Stomach (tissue), 19 donors: ENCODE measurements at regions of chr20 and their contacts with region 1.

Region 1: DNA sequence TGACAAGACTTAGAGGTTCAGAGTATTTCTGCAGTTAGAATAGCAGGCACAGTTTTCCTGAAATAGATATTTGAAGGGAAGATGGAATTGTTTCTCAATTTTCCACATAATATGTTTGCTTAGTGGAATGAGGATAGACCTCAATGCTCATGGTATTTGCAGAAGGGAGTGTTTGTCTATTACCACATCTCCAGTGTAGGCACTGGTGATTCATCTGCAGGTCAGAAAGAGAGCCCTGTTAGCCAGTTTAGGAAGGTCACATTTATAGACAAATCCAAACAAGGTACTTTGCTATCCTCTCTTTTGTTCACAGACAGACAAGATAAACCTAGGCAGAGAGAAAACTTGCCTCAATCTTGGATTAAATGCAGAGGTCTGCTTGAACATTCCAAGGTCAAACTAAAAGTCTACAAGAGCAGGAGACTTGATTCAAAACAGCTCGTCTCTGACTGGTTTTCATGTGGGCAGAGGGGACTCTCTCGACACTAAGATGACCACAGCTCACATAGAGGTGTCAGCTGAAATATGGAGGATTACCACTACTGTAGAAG is 22.8 kb downstream of the ISM1 start:
- DNase-seq: no peak
- H3K4me3 ChIP-seq: no peak overlapping the region
- H3K27ac ChIP-seq: no peak overlapping the region
- H3K4me1 ChIP-seq: no peaks in the 10 kb centered on the region
- H3K27me3 ChIP-seq: no peaks in the 10 kb centered on the region
- CTCF ChIP-seq: no peak
- EP300 ChIP-seq: no peak
- POLR2A ChIP-seq: no peak

Region 2: GRCh38 chr20:12997128-12998031 is 246.5 kb before region 1 on chr20:
- intact Hi-C with region 1: no loop called
- DNase-seq: no peak
- H3K4me3 ChIP-seq: no peak overlapping the region
- H3K27ac ChIP-seq: no peak overlapping the region
- H3K4me1 ChIP-seq: no peaks in the 10 kb centered on the region
- H3K27me3 ChIP-seq: no peaks in the 10 kb centered on the region
- CTCF ChIP-seq: no peak
- EP300 ChIP-seq: no peak
- POLR2A ChIP-seq: no peak

Region 3: DNA sequence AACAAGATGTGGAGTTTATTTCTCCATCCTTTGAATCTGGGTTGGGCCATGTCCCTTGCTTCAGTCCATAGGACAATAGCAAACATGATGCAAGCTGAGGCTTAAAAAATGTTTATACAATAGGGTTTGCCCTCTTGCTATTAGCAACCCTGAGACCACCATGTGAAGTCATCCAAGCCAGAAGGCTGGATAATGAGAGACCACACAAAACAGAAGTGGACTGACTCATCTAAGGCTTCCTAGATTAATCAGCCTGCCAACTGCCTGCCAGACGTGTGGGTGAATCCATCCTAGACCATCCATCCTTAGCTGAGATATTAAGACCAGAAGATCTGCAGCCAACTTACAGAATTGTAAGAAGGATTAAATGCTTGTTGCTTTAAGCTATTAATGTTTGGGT is 60.9 kb before region 1 on chr20:
- intact Hi-C with region 1: loop called (anchors 10 kb)
- DNase-seq: no peak
- H3K4me3 ChIP-seq: no peak overlapping the region
- H3K27ac ChIP-seq: no peak overlapping the region
- H3K4me1 ChIP-seq: no peaks in the 10 kb centered on the region
- H3K27me3 ChIP-seq: no peaks in the 10 kb centered on the region
- CTCF ChIP-seq: no peak
- EP300 ChIP-seq: no peak
- POLR2A ChIP-seq: no peak

Region 4: DNA sequence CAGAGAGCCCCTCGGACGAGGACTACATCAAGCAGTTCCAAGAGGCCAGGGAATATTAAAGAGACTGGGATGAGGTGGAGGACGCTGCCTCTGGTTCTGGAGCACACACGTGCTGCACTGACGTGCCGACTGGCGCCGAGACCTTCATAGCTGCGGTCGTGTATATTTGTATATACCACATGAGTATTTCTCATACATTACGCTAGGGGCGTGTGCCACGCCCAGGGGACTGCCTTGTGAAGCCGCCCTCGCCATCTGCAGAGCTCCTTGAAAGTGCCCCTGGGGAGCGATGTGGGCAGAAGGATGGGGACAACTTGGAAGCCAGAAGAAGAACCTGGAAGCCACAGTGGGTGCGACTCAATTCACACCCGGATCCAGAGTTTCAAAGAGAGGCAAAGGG is 55.5 kb after region 1 on chr20:
- intact Hi-C with region 1: no loop called
- DNase-seq: no peak
- H3K4me3 ChIP-seq: no peak overlapping the region
- H3K27ac ChIP-seq: no peak overlapping the region
- H3K4me1 ChIP-seq: no peaks in the 10 kb centered on the region
- H3K27me3 ChIP-seq: no peaks in the 10 kb centered on the region
- CTCF ChIP-seq: no peak
- EP300 ChIP-seq: no peak
- POLR2A ChIP-seq: no peak